Activated naive CD4-positive, alpha-beta T cell treated with anti-CD3 and anti-CD28 coated beads for 36 hours (primary cell): ENCODE measurements at regions of chr7 and their contacts with region 1.

Region 1: GRCh38 chr7:98400542-98401340 is at the start of gene BAIAP2L1:
- DNase-seq: peak; percentile 94
- H3K4me3 Mint-ChIP-seq: peak within 1 kb of the TSS; percentile 50
- H3K27ac Mint-ChIP-seq: no peak within 1 kb of the TSS
- H3K4me1 Mint-ChIP-seq: peaks cover 8% of the 10 kb centered on the region
- H3K27me3 Mint-ChIP-seq: peaks cover 16% of the 10 kb centered on the region
- total RNA-seq, gene BAIAP2L1: 5.6 to 6.1 TPM

Region 2: GRCh38 chr7:97872025-97872669 is 528.6 kb before region 1 on chr7 and contains the start of gene ASNS:
- CTCF ChIA-PET with region 1: no interaction called
- intact Hi-C with region 1: loop called (anchors 2 kb)
- DNase-seq: peak; percentile 95
- H3K4me3 Mint-ChIP-seq: peak within 1 kb of the TSS; percentile 88
- H3K27ac Mint-ChIP-seq: peak within 1 kb of the TSS; percentile 93
- H3K4me1 Mint-ChIP-seq: peaks cover 25% of the 10 kb centered on the region
- H3K27me3 Mint-ChIP-seq: no peaks in the 10 kb centered on the region
- total RNA-seq, gene ASNS: 332 to 337 TPM

Region 3: DNA sequence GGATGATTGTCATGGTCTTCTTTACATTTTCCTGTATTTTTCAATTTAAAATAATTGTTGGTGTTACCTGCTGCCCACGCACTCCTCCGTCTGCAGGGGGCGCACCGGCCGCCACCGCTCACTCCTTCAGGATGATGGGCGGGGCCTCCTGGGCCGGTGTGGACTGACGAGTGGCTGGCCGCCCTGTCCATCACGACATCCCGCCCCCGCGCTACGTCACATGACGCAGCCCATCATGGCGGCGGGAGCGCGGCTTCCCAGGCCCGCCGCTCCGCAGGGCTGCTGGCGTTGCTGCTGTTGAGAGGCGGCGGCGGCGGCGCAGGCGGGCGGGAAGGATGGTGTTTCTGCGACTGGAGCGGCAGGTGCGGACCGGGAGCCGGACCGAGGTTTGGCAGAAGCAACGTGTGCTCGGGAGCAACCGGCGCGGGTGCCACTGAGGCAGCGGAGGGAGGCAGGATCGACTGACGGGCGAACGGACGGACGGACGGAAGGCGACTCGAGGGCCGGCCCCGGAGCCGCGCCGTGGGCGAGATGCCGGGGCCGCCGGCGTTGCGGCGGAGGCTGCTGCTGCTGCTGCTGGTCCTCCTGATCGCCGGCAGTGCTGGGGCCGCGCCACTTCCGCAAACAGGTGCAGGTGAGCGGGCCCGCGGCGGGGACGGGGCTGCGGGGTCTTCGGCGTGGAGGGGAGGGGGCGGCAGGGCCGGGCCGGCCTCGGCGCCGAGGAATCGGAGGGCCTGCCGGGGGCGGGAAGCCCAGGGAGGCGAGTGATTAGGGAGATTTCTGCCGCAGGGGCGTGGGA is 293.9 kb before region 1 on chr7 and contains the start of gene LMTK2:
- CTCF ChIA-PET with region 1: no interaction called
- intact Hi-C with region 1: loop called (anchors 1 kb)
- DNase-seq: peak; percentile 96
- H3K4me3 Mint-ChIP-seq: peak within 1 kb of the TSS; percentile 94
- H3K27ac Mint-ChIP-seq: peak within 1 kb of the TSS; percentile 72
- H3K4me1 Mint-ChIP-seq: peaks cover 38% of the 10 kb centered on the region
- H3K27me3 Mint-ChIP-seq: peaks cover 8% of the 10 kb centered on the region
- total RNA-seq, gene LMTK2: 11.4 to 13.1 TPM

Region 4: DNA sequence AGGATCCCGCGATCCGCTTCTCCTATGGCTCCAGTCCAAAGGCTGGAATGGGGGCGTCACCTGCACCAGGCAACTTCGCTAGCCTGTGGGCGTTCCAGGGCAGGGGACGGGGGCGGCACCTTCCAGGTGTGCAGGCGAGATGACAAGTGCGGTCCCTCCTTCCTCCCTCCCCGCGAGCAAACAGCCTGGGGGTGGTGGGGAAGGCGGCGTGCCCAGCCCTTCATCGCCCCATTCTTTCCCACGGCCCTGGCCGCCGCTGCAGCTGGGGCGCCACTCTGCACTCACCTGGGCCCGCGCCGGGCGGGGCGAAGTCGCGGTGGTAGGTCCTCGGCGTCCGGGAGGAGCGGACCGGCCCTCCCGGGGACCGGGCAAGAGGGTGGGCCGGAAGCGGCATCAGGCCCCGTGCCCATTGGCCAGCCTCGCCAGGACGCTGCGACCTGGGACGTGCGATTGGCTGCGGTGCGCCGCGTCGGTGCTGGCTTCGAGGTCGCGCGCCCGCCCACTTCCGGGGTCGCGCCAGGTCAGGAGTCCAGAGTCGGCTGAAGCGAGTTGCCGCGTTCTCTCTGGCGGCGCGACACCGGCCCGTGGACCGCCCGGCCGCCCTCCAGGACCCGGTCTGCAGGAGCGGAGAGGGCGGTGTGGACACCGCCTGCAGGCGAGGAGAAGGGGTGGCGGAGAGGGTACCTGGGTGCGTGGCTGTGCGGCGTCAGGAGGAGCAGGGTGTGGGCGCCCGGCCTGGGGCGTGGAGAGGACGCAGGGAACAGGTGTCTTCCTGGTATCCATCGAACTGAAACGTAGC is 148.7 kb before region 1 on chr7 and contains the start of gene TECPR1:
- CTCF ChIA-PET with region 1: interaction called, 3 read pairs
- intact Hi-C with region 1: loop called (anchors 1 kb)
- DNase-seq: peak; percentile 90
- H3K4me3 Mint-ChIP-seq: peak within 1 kb of the TSS; percentile 93
- H3K27ac Mint-ChIP-seq: peak within 1 kb of the TSS; percentile 94
- H3K4me1 Mint-ChIP-seq: peaks cover 53% of the 10 kb centered on the region
- H3K27me3 Mint-ChIP-seq: no peaks in the 10 kb centered on the region
- total RNA-seq, gene TECPR1: 29.8 to 36.7 TPM

Region 5: DNA sequence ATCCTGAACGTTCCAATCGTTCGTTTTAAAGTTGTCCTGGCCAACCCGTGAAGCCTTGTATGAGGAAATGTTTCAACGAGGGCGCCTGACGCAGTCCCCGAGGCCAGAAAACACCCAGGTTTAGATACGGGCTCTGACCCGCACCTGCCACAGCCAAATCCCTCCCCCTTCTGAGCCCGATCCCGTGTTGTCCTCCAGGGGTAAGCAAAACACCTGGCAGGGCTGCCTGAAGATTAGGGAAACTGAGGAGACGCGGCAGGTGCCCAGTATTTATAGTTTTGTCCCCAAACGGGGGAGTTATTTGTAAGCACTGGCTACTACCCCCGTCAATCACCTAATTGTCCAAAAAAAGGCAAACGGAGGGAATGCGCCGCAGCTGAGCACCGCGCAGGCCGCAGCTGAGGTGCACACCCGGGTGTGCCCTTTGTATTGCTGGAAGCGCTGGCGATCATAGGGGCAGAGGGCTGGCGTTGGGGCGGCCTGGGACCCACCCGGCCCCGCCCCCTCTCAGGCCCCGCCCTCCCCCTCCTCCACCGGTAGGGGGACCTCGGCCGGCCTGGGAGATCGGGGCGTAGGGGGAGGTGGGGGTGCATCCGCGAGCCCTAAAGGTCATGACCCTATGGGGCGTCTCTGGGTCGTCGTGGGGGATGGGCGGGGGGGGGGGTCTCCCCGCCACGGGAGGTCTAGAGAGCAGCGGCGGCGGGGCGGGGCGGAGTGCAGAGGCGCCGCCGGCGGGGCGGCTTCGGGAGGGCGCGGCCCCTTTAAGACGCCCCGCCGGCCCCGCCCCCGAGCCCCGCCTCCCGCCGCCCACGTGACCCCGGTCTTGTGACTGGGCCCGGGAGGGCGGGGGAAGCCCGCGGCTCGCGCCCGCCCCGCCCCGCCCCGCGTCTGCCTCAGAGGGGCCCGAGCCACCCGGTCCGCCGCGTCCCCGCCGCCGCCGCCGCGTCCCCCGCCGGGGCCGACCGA is 119.7 kb before region 1 on chr7 and contains the start of gene BRI3:
- CTCF ChIA-PET with region 1: no interaction called
- intact Hi-C with region 1: loop called (anchors 1 kb)
- DNase-seq: peak; percentile 91
- H3K4me3 Mint-ChIP-seq: peak within 1 kb of the TSS; percentile 77
- H3K27ac Mint-ChIP-seq: peak within 1 kb of the TSS; percentile 41
- H3K4me1 Mint-ChIP-seq: peaks cover 29% of the 10 kb centered on the region
- H3K27me3 Mint-ChIP-seq: no peaks in the 10 kb centered on the region
- total RNA-seq, gene BRI3: 51.6 to 54.4 TPM

Region 6: DNA sequence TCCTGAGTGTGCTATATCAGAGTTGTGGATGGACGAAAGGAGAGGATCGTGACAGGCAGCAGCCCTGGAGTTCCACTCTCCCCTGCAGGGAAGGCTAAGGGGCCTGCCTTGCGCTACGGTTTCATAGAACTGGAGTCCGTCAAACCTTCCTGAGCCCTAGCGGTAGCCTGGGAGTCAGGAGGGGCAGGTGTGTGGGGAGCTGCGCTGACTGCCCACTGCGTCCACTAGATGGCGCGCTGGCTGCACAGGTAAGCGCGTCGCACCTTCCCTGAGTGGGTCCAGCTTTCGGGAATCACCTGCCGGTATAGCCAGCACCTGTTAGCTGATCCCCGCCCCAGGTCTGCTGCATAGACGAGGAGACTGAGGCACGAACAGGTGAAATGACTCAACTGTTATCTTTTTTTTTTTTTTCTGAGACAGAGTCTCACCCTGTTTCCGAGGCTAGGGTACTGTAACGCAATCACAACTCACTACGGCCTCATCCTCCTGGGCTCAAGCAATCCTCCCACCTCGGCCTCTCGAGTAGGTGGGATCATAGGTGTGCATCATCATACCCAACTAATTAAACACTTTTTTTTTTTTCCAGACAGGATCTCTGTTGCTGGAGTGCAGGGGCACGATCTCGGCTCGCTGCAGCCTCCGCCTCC is 20.3 kb after region 1 on chr7:
- CTCF ChIA-PET with region 1: interaction called, 11 read pairs
- intact Hi-C with region 1: no loop called
- DNase-seq: peak; percentile 74
- H3K4me3 Mint-ChIP-seq: no peak overlapping the region
- H3K27ac Mint-ChIP-seq: no peak overlapping the region
- H3K4me1 Mint-ChIP-seq: no peaks in the 10 kb centered on the region
- H3K27me3 Mint-ChIP-seq: peaks cover 11% of the 10 kb centered on the region

Region 7: DNA sequence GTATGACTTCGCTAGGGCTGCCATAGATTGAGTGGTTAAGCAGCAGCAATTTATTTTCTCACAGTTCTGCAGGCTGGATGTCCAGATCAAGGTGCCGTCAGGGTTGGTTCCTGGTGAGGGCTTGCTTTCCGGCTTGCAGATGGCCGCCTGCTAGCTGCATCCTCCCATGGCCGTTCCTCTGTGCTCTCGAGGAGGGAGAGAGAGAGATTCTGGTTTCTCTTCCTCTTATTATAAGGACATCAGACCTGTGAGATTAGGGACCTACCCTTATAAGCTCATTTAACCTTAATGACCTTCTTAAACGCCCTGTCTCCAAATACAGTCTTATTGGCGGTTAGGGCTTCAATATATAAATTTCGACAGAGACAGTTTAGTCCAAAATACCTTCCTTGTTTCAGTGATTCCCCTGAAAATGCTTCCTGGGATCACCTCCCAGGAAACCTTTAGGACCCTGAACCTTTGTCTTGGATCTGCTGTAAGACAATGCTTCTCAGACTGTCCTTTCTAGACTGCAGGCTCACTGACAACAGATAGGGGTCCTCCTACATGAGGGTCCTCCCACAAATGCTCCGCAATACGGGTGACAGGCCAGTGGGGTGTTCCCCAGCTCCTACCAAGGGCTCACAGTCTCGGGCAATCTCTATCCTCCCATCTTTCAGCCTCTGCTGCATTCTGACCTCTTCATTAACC is 82.7 kb after region 1 on chr7:
- CTCF ChIA-PET with region 1: no interaction called
- intact Hi-C with region 1: no loop called
- DNase-seq: no peak
- H3K4me3 Mint-ChIP-seq: no peak overlapping the region
- H3K27ac Mint-ChIP-seq: no peak overlapping the region
- H3K4me1 Mint-ChIP-seq: no peaks in the 10 kb centered on the region
- H3K27me3 Mint-ChIP-seq: peaks cover 4% of the 10 kb centered on the region